Left cardiac atrium (tissue), 4 donors: ENCODE measurements at regions of chr1 and their contacts with region 1.

Region 1: GRCh38 chr1:89347296-89347695 is 16.6 kb upstream of the GBP6 start:
- DNase-seq: no peak
- ATAC-seq: no peak

Region 2: DNA sequence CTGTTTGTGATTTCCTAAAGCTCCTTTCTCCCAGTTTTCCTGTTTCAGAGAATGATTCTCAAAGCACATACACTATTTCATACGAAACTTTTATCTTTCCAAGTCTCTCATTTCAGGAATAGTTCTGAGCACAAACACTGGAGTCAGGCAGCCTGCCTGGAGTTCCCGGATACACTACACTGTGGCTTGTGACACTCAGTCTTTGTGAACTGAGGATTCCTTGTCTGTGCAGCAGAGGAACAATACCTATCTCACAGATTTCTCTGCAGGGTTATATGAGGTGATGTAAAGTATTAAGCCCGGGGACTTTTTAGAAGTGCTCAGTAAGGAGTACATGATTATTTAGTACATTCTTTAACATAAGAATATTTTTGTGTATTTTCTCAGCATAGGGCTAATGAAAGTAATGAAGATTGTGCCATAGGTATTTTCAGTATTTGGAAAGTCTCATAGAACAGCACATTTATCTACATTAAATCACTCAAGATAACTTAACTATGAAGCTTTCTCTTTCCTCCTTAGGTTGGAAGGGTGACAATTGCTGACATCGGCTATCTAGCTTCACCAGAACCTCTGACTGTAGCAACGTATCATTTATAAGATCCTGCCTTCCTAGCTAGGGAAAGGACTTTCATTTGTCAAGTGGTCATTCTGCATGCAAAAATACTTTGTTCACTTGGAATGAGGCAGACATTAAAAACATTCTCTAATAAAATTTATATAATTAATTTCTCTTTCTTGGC is 234.3 kb before region 1 on chr1:
- intact Hi-C with region 1: loop called in 1 of 2 experiments (anchors 10 kb)
- DNase-seq: no peak
- ATAC-seq: no peak

Region 3: DNA sequence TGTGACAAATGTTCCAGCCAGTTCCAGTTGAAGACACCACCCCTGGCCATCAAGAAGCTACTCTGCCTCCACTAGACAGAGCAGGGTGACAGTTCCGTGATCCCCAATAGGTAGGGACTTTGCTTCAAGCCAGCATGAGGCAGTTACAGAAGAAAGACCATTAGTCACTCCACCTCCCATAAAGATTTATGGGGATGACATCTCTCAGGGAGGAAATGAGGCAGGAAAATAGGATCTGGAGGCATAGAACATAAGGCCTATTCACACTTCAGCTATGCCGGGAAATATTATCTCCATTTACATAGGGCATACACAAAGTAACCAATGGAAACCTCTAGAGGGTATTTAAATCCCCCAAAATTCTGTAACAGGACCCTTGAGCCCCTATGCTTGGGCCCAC is 168.0 kb before region 1 on chr1:
- intact Hi-C with region 1: loop called in 1 of 2 experiments (anchors 10 kb)
- DNase-seq: no peak
- ATAC-seq: no peak